GM12878 (cell line): ENCODE measurements at regions of chr4 and their contacts with region 1.

Region 1: DNA sequence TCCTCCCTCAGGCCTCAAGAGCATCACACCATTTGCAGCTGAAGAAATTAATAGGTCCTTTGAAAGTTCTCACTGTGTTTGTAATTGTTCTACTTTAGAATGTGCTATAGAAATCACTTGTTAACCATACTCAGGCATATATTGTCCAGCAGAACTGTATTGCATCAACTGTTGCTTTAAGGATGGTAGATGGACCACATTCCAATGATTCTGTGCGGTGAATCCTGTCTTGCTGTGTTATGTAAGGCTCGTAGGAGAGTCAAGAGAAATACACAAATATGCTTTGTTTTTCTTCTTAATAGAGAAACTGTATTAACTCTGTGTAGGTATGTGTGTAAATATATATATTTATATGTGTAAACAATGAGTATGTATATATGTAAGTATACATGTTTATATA is 6.3 kb upstream of the ADGRA3 start:
- DNase-seq: no peak
- ATAC-seq: no peak
- H3K4me3 ChIP-seq: no peak overlapping the region
- H3K27ac ChIP-seq: no peak overlapping the region
- H3K4me1 ChIP-seq: no peaks in the 10 kb centered on the region
- H3K27me3 ChIP-seq: no peaks in the 10 kb centered on the region
- CTCF ChIP-seq: no peak
- EP300 ChIP-seq: no peak
- POLR2A ChIP-seq: no peak
- RAD21 ChIP-seq: no peak

Region 2: GRCh38 chr4:22551550-22551949 is 29.3 kb after region 1 on chr4:
- CTCF ChIA-PET with region 1: no interaction called
- POLR2A ChIA-PET with region 1: no interaction called
- RAD21 ChIA-PET with region 1: no interaction called
- SMC1A ChIA-PET with region 1: interaction called, 11 read pairs
- in situ Hi-C with region 1: no loop called
- intact Hi-C with region 1: no loop called
- DNase-seq: no peak
- ATAC-seq: no peak
- H3K4me3 ChIP-seq: no peak overlapping the region
- H3K27ac ChIP-seq: no peak overlapping the region
- H3K4me1 ChIP-seq: no peaks in the 10 kb centered on the region
- H3K27me3 ChIP-seq: no peaks in the 10 kb centered on the region
- CTCF ChIP-seq: no peak
- EP300 ChIP-seq: no peak
- POLR2A ChIP-seq: no peak
- RAD21 ChIP-seq: no peak

Region 3: DNA sequence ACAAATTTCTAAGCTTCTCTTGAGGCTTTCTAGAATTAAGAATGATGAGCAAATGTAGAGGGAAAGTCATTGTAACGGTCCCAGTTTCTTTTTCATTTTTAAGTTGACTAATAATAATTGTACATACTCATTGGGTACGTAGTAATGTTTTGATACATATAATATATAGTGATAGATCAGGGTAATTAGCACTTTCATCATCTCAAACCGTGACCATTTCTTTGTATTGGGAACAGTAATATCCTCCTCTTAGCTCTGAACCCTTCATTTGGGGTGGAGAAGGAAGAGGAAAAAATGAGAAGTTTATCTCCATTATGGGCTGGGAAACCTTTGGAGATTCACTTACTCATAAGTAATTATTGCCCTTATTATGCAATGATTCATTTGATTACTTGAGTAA is 131.5 kb after region 1 on chr4:
- CTCF ChIA-PET with region 1: no interaction called
- POLR2A ChIA-PET with region 1: no interaction called
- RAD21 ChIA-PET with region 1: no interaction called
- SMC1A ChIA-PET with region 1: no interaction called
- in situ Hi-C with region 1: no loop called
- intact Hi-C with region 1: no loop called
- DNase-seq: no peak
- ATAC-seq: no peak
- H3K4me3 ChIP-seq: no peak overlapping the region
- H3K27ac ChIP-seq: no peak overlapping the region
- H3K4me1 ChIP-seq: no peaks in the 10 kb centered on the region
- H3K27me3 ChIP-seq: no peaks in the 10 kb centered on the region
- CTCF ChIP-seq: no peak
- EP300 ChIP-seq: no peak
- POLR2A ChIP-seq: no peak
- RAD21 ChIP-seq: no peak

Region 4: DNA sequence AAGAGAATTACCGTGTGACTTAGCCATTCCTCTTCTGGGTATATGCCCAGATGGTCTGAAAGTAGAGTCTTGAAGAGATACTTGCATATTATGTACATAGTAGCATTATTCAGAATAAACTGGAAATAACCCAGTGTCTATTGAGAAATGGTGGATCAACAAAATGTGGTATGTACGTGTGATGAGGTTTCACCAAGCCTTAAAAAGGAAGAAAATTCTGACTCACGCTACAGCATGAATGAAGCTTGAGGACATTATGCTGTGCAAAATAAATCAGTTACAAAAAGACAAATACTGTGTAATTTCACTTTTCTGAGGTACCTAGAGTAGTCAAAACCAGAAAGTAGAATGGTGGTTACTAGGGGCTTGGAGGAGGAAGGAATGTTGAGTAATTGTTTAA is 207.8 kb after region 1 on chr4:
- CTCF ChIA-PET with region 1: no interaction called
- POLR2A ChIA-PET with region 1: no interaction called
- RAD21 ChIA-PET with region 1: no interaction called
- SMC1A ChIA-PET with region 1: no interaction called
- in situ Hi-C with region 1: no loop called
- intact Hi-C with region 1: no loop called
- DNase-seq: no peak
- ATAC-seq: peak; percentile 79
- H3K4me3 ChIP-seq: no peak overlapping the region
- H3K27ac ChIP-seq: no peak overlapping the region
- H3K4me1 ChIP-seq: no peaks in the 10 kb centered on the region
- H3K27me3 ChIP-seq: no peaks in the 10 kb centered on the region
- CTCF ChIP-seq: no peak
- EP300 ChIP-seq: peak in 1 of 2 experiments; percentile 45; a peak in 1 of 4 replicates
- POLR2A ChIP-seq: no peak
- RAD21 ChIP-seq: no peak

Region 5: GRCh38 chr4:23245203-23245832 is 723.1 kb after region 1 on chr4:
- CTCF ChIA-PET with region 1: no interaction called
- POLR2A ChIA-PET with region 1: no interaction called
- RAD21 ChIA-PET with region 1: no interaction called
- SMC1A ChIA-PET with region 1: no interaction called
- in situ Hi-C with region 1: no loop called
- intact Hi-C with region 1: no loop called
- DNase-seq: no peak
- ATAC-seq: no peak
- H3K4me3 ChIP-seq: no peak overlapping the region
- H3K27ac ChIP-seq: no peak overlapping the region
- H3K4me1 ChIP-seq: no peaks in the 10 kb centered on the region
- H3K27me3 ChIP-seq: no peaks in the 10 kb centered on the region
- CTCF ChIP-seq: no peak
- EP300 ChIP-seq: no peak
- POLR2A ChIP-seq: no peak
- RAD21 ChIP-seq: no peak